Posterior vena cava (tissue), 2 donors: ENCODE measurements at regions of chr3 and their contacts with region 1.

Region 1: DNA sequence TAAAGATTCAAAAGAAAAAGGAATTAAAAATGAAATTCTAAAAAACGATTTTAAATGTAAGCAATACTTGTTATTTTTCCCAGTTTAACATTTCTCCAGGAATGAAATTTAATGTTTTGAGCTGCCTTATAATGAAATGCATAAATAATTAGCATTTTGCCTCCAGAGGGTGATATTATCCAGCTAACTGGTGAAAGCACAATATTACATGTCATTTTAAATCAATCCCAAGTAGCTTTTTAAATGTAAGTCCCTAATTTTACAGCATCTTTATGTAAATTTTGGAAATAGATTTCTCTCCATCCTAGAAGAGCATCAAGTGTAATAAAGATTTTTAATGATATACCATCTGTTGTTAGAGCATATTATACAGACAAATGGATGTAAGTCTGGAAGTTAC is 139.1 kb upstream of the P2RY1 start:
- DNase-seq: no peak

Region 2: DNA sequence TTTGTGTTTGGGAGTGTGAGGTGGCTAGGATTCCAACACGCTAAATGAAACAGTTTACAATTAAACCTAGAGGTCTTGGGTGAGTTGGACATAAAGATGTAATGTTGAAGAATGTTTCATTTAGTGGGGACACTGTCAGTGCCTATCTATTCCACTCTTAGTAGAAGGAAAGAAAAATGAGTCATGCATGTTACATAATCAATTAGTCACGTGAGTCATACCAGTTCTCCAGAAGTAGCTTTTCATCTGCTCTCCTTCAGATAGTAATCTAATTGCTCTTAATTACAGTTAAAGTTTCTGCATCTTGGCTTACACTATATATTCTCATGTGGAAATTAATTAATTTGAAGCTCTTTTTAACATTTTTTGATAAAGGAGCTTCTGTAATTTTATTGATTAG is 23.4 kb after region 1 on chr3:
- intact Hi-C with region 1: no loop called
- DNase-seq: no peak

Region 3: DNA sequence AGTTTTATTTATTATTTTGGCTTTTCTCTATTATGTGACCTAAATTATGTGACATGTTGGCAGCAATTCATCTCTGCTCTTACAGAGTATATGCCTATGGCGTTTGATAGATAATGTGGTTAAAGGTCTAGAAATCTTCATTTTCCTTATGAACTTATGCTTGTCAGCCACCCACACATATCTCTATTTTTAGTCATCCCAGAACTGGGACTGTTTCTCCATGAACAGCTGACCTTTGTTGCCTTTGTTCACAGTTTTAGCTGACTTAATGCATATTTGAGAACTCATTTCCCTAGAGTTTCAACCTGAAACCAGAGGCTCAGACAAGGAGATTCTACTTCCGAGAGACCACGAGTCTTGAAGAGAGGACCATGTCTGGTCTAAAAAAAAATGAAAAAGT is 642.6 kb after region 1 on chr3:
- intact Hi-C with region 1: loop called in 1 of 2 experiments (anchors 5 kb)
- DNase-seq: no peak